Panc1 (cell line): ENCODE measurements at regions of chr6 and their contacts with region 1.

Region 1: GRCh38 chr6:73285674-73286283 is 22.8 kb upstream of the KHDC1 start:
- DNase-seq: no peak
- ATAC-seq: peak; percentile 82
- H3K4me3 ChIP-seq: no peak overlapping the region
- H3K27ac ChIP-seq: no peak overlapping the region
- H3K4me1 ChIP-seq: no peaks in the 10 kb centered on the region
- H3K27me3 ChIP-seq: no peaks in the 10 kb centered on the region
- CTCF ChIP-seq: peak; percentile 72

Region 2: GRCh38 chr6:73169111-73169510 is 116.7 kb before region 1 on chr6:
- CTCF ChIA-PET with region 1: no interaction called
- POLR2A ChIA-PET with region 1: interaction called, 11 read pairs
- in situ Hi-C with region 1: no loop called
- intact Hi-C with region 1: no loop called
- DNase-seq: no peak
- ATAC-seq: no peak
- H3K4me3 ChIP-seq: no peak overlapping the region
- H3K27ac ChIP-seq: no peak overlapping the region
- H3K4me1 ChIP-seq: no peaks in the 10 kb centered on the region
- H3K27me3 ChIP-seq: no peaks in the 10 kb centered on the region
- CTCF ChIP-seq: no peak

Region 3: GRCh38 chr6:73309769-73310502 is 24.2 kb after region 1 on chr6:
- CTCF ChIA-PET with region 1: interaction called, 13 read pairs
- POLR2A ChIA-PET with region 1: interaction called, 5 read pairs
- in situ Hi-C with region 1: no loop called
- intact Hi-C with region 1: no loop called
- DNase-seq: peak; percentile 55
- ATAC-seq: peak; percentile 97
- H3K4me3 ChIP-seq: peak overlapping the region; percentile 82 to 94
- H3K27ac ChIP-seq: peak overlapping the region; percentile 94
- H3K4me1 ChIP-seq: peaks cover 8% of the 10 kb centered on the region; the same call in 1 of the 2 replicates
- H3K27me3 ChIP-seq: no peaks in the 10 kb centered on the region
- CTCF ChIP-seq: peak; percentile 98

Region 4: GRCh38 chr6:73329201-73329600 is 43.4 kb after region 1 on chr6:
- CTCF ChIA-PET with region 1: interaction called, 24 read pairs
- POLR2A ChIA-PET with region 1: interaction called, 3 read pairs
- in situ Hi-C with region 1: no loop called
- intact Hi-C with region 1: loop called (anchors 1 kb)
- DNase-seq: no peak
- ATAC-seq: no peak
- H3K4me3 ChIP-seq: no peak overlapping the region
- H3K27ac ChIP-seq: no peak overlapping the region
- H3K4me1 ChIP-seq: no peaks in the 10 kb centered on the region
- H3K27me3 ChIP-seq: no peaks in the 10 kb centered on the region
- CTCF ChIP-seq: no peak

Region 5: DNA sequence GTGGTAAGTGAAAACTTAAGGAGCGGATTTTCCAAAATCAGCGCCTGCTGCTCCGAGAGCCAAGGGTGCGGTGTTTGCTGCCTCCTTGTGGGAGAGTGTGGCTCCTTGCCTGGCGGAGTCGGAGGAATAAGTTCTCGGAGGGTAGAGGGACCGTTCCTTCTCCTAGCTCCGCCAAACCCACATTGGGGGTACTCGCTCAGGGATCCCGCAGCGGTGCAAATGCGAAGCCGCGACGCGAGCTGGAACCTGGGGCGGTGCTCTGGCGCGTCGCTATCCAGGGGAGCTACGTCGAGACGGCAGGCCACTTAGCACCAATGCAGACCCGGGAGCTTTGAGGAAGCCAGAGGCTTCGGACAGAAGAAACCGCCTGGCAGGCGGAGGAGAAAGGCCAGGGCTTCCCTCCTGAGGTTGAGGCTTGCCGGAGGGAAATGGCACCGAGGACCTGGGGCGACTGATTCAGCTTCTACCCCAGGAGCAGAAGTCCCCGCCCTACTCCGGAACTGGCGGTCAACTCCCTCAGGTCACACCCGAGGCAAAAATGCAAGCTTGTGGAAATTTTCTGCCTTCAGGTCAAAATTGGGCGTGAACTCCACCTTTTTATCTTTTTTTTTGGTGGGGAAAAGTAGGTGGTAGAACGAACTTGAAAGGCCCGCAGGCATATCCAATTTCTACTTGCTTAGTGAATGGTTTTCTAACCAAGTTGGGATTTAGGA is 103.2 kb after region 1 on chr6:
- CTCF ChIA-PET with region 1: interaction called, 5 read pairs
- POLR2A ChIA-PET with region 1: no interaction called
- in situ Hi-C with region 1: no loop called
- intact Hi-C with region 1: loop called (anchors 2 kb)
- DNase-seq: peak; percentile 67
- ATAC-seq: peak; percentile 93
- H3K4me3 ChIP-seq: peak overlapping the region; percentile 52 to 88
- H3K27ac ChIP-seq: peak overlapping the region; percentile 87
- H3K4me1 ChIP-seq: peaks cover 8% of the 10 kb centered on the region; the same call in 1 of the 2 replicates
- H3K27me3 ChIP-seq: no peaks in the 10 kb centered on the region
- CTCF ChIP-seq: peak; percentile 98

Region 6: GRCh38 chr6:73503027-73503772 is 217.4 kb after region 1 on chr6:
- CTCF ChIA-PET with region 1: no interaction called
- POLR2A ChIA-PET with region 1: no interaction called
- in situ Hi-C with region 1: no loop called
- intact Hi-C with region 1: no loop called
- DNase-seq: no peak
- ATAC-seq: peak; percentile 19; the same call in 1 of the 2 replicates
- H3K4me3 ChIP-seq: no peak overlapping the region
- H3K27ac ChIP-seq: no peak overlapping the region
- H3K4me1 ChIP-seq: no peaks in the 10 kb centered on the region
- H3K27me3 ChIP-seq: no peaks in the 10 kb centered on the region
- CTCF ChIP-seq: no peak

Region 7: GRCh38 chr6:73653571-73654424 is 368.0 kb after region 1 on chr6 and contains the start of gene SLC17A5:
- CTCF ChIA-PET with region 1: interaction called, 11 read pairs
- POLR2A ChIA-PET with region 1: no interaction called
- in situ Hi-C with region 1: no loop called
- intact Hi-C with region 1: no loop called
- DNase-seq: peak; percentile 75
- ATAC-seq: peak; percentile 97
- H3K4me3 ChIP-seq: peak within 1 kb of the TSS; percentile 73 to 98
- H3K27ac ChIP-seq: peak within 1 kb of the TSS; percentile 77
- H3K4me1 ChIP-seq: peaks cover 21% of the 10 kb centered on the region
- H3K27me3 ChIP-seq: no peaks in the 10 kb centered on the region
- CTCF ChIP-seq: no peak
- total RNA-seq, gene SLC17A5: 20.6 TPM